K562 (cell line): ENCODE measurements at regions of chr4 and their contacts with region 1.

Region 1: GRCh38 chr4:87543835-87544461 is 14.8 kb upstream of the SPARCL1 start:
- DNase-seq: peak in 3 of 4 experiments; percentile 14 to 17 (median 14)
- ATAC-seq: peak; percentile 83
- H3K4me3 ChIP-seq: no peak overlapping the region
- H3K27ac ChIP-seq: no peak overlapping the region
- H3K4me1 ChIP-seq: no peaks in the 10 kb centered on the region
- H3K27me3 ChIP-seq: no peaks in the 10 kb centered on the region; a peak in 1 of 5 replicates
- CTCF ChIP-seq: peak in 1 of 3 experiments; percentile 46; a peak in 1 of 6 replicates
- EP300 ChIP-seq: no peak
- POLR2A ChIP-seq: no peak
- RAD21 ChIP-seq: peak in 1 of 2 experiments; percentile 39; a peak in 3 of 4 replicates

Region 2: DNA sequence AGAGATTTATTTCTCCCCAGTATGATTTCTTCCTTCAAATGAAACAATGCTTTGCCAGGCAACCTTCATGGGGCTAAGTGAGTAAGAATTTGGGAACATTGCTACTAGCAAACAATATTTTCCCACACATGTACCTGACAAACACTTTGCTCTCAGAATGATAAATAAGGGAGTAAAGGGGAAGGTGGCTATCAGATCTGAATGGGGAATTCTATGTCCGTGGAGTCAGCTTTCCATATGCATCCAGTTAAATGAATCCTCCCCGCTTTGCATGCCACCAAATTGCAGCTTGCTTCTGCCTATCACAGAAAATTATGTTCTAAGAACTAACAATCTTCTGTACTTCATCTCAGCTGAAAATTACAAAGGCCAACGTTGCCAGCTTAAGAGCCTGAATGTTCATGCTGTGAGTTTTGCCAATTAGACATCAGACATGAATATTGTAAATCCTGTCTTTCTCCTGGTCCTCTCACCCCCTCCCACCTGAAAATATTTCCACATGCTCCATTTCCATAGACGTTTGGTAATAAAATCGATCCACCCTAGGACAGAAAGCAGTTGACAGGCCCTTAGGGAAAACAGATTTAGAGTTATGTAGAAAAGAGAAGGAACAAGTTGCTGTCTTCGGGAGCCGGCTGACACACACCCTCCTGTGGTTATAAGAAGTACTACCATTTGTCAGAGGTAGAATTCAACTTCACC is 295.1 kb after region 1 on chr4:
- CTCF ChIA-PET with region 1: no interaction called
- POLR2A ChIA-PET with region 1: no interaction called
- in situ Hi-C with region 1: no loop called
- intact Hi-C with region 1: loop called (anchors 5 kb)
- DNase-seq: peak; percentile 25 to 32 (median 29)
- ATAC-seq: peak; percentile 78
- H3K4me3 ChIP-seq: no peak overlapping the region
- H3K27ac ChIP-seq: no peak overlapping the region
- H3K4me1 ChIP-seq: no peaks in the 10 kb centered on the region
- H3K27me3 ChIP-seq: no peaks in the 10 kb centered on the region
- CTCF ChIP-seq: peak; percentile 46 to 73 (median 53); a peak in 4 of 6 replicates
- EP300 ChIP-seq: no peak
- POLR2A ChIP-seq: no peak
- RAD21 ChIP-seq: peak; percentile 58 to 64